Heart left ventricle (tissue), 16 donors: ENCODE measurements at regions of chr19 and their contacts with region 1.

Region 1: DNA sequence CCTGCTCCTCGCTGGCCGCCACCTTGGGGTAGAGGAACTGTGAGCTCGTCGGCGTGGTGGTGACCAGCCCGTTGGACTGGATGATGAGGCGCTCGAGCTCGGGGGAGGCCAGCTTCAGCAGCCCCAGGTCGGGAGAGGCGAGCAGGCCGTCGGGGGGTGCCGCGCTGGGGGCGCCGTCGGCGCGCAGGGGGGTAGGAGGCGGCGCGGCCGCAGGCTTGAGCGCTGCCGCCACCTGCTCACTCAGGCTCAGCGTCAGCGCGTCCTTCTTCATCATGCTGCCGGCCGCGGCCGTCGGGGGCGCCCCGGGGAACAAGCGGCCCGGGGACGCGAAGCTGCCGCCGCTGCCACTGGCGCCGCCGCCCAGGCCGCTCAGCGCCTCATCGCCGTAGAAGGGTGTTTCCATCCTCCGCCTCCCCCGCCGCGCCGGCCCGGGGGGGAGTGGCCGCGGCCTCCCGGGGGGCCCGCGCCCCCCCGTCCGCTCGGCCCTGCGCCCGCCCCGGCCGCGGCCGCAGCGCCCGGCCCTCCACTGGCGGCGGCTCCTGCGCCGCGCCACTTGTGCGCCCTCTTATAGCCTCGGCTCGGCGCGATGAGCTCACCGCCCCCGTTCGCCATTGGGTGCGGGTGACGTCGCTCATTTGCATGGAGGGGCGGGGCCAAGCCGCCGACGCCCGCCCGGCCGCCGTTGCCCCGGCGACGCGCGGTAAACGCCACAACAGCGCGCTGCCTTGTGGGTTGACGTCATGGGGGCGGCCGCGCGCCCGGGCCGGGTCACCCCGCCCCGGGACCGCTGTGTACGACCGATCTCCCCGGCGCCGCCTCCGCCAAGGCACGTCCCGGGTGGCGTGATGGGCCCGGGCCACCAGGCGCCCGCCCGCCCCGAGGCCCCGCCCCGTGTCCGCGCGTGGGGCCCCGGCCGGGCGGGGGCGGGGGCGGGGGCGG is at the start of gene JUND:
- DNase-seq: peak; percentile 99
- ATAC-seq: peak; percentile 68 to 88 (median 79)
- H3K4me3 ChIP-seq: peak within 1 kb of the TSS; percentile 63 to 100 (median 92)
- H3K27ac ChIP-seq: peak within 1 kb of the TSS; percentile 99 to 100 (median 100)
- H3K4me1 ChIP-seq: peaks cover 10 to 52% (median 38%) of the 10 kb centered on the region in 12 donors
- H3K27me3 ChIP-seq: no peaks in the 10 kb centered on the region
- CTCF ChIP-seq: peak in 2 of 12 donors; percentile 21 to 22
- POLR2A ChIP-seq: peak; percentile 90 to 98
- total RNA-seq, gene JUND: 80.2 to 352 (median 137) TPM

Region 2: GRCh38 chr19:17966550-17967256 is 314.6 kb before region 1 on chr19 and contains the start of gene KCNN1:
- intact Hi-C with region 1: no loop called
- DNase-seq: no peak
- ATAC-seq: no peak
- H3K4me3 ChIP-seq: peak within 1 kb of the TSS in 2 of 12 donors; percentile 21 to 25
- H3K27ac ChIP-seq: no peak within 1 kb of the TSS
- H3K4me1 ChIP-seq: peaks cover 0 to 16% (median 0%) of the 10 kb centered on the region in 12 donors
- H3K27me3 ChIP-seq: peaks cover 7 to 82% (median 42%) of the 10 kb centered on the region in 9 donors
- CTCF ChIP-seq: no peak
- POLR2A ChIP-seq: no peak
- total RNA-seq, gene KCNN1: 0.07 to 0.27 TPM in 2 of 9 donors, not detected in the others

Region 3: GRCh38 chr19:18203863-18204393 is 77.4 kb before region 1 on chr19 and contains the start of gene RAB3A:
- intact Hi-C with region 1: loop called in 2 of 10 experiments (anchors 1 to 2 kb)
- DNase-seq: peak; percentile 100
- ATAC-seq: peak; percentile 94 to 96 (median 94)
- H3K4me3 ChIP-seq: peak within 1 kb of the TSS; percentile 56 to 91 (median 76)
- H3K27ac ChIP-seq: peak within 1 kb of the TSS; percentile 96 to 100 (median 98)
- H3K4me1 ChIP-seq: peaks cover 0 to 31% (median 22%) of the 10 kb centered on the region in 12 donors
- H3K27me3 ChIP-seq: peaks cover 0 to 4% (median 0%) of the 10 kb centered on the region in 9 donors
- CTCF ChIP-seq: peak in 3 of 12 donors; percentile 6 to 18 (median 14)
- POLR2A ChIP-seq: peak; percentile 51 to 60
- total RNA-seq, gene RAB3A: 6.9 to 39.2 (median 31.5) TPM

Region 4: GRCh38 chr19:18304458-18305310 is 23.3 kb after region 1 on chr19:
- intact Hi-C with region 1: loop called in 7 of 10 experiments (anchors 1 to 2 kb)
- DNase-seq: peak; percentile 89 to 95 (median 93)
- ATAC-seq: peak; percentile 76 to 89 (median 84)
- H3K4me3 ChIP-seq: peak overlapping the region in 11 of 12 donors; percentile 13 to 62 (median 46)
- H3K27ac ChIP-seq: peak overlapping the region; percentile 89 to 100 (median 98)
- H3K4me1 ChIP-seq: peaks cover 18 to 75% (median 54%) of the 10 kb centered on the region in 12 donors
- H3K27me3 ChIP-seq: no peaks in the 10 kb centered on the region
- CTCF ChIP-seq: peak in 2 of 12 donors; percentile 12 to 21
- POLR2A ChIP-seq: peak in 1 of 2 donors; percentile 76

Region 5: DNA sequence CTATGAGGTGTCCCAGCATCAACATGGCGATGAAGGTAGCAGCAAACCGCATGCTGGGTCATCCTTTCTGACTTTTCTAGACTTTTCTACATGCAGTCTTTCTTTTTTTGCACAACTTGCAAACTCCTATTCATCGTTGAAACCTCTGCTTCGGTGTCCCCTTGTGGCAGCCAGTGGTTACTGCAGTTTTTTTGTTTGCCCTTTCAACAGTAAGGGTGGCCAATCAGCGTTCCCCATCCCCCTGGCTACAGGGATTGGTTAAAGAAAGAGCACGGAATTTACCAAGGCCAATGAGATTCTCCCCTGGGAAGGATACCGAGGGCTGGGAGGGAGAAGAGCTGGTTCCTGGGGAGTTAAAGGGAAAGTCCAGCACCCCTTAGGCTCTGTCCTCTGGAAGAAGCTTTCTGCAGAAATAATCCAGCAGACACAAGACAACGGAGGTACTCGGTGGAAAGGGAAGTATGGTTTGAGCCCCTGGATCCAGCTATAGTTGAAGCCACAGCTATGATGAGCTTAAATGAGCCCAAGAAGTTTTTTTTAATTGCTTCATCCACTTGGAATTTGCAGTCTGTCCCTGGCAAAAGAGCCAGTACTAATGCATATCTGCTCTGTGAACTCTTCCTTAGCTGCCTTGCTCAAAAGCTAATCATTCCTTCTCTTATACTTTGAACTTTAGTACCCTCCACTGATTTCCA is 47.1 kb after region 1 on chr19:
- intact Hi-C with region 1: loop called (anchors 1 to 2 kb)
- DNase-seq: peak; percentile 91 to 95 (median 94)
- ATAC-seq: peak; percentile 98 to 99 (median 98)
- H3K4me3 ChIP-seq: peak overlapping the region in 10 of 12 donors; percentile 16 to 50 (median 46)
- H3K27ac ChIP-seq: peak overlapping the region; percentile 33 to 84 (median 75)
- H3K4me1 ChIP-seq: peaks cover 3 to 25% (median 15%) of the 10 kb centered on the region in 12 donors
- H3K27me3 ChIP-seq: no peaks in the 10 kb centered on the region
- CTCF ChIP-seq: peak; percentile 89 to 98 (median 94)
- POLR2A ChIP-seq: peak; percentile 85 to 92

Region 6: GRCh38 chr19:18401580-18402112 is 120.3 kb after region 1 on chr19:
- intact Hi-C with region 1: loop called in 1 of 10 experiments (anchors 10 kb)
- DNase-seq: peak in 3 of 5 donors; percentile 65 to 84 (median 72)
- ATAC-seq: peak; percentile 81 to 90 (median 82)
- H3K4me3 ChIP-seq: no peak overlapping the region
- H3K27ac ChIP-seq: peak overlapping the region in 1 of 12 donors; percentile 74
- H3K4me1 ChIP-seq: peaks cover 0 to 53% (median 0%) of the 10 kb centered on the region in 12 donors
- H3K27me3 ChIP-seq: peaks cover 0 to 18% (median 0%) of the 10 kb centered on the region in 9 donors
- CTCF ChIP-seq: peak in 9 of 12 donors; percentile 11 to 41 (median 23)
- POLR2A ChIP-seq: no peak